ENCODE measurements at regions of chr1 and their contacts with region 1.

Region 1: DNA sequence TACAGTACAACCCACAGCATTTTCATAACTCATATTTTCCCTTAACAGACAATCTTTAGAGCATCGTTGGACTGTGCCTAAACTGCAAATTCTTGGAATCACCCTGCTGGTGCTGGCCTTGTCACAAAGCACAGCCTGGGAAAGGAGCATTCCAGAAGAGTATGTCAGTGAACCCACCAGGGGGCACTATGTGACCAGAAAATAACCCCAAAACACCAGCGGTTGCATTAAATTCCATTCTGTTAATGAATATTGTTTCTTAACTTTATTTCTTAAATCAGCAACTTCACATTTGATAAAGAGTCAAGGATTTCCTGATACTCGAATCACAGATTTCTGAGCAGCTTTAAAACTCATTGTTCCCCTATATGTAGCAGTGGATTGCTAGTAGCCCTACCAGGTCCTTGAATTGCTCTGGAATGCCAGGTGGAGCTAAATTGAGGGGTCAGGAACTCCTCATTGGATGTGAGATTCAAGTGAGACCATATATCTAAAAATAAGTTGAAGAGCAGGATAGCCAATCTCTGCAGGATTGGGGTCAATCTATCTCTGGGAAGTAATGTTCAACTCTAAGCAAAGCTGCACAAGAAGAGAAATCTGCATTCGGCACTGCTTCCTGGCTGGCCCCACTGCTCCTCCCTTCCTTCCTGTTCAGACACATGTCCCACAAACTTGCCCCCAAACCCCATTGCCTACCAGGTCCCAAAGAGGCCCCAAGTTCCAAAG is 12.7 kb upstream of the RAB4A start:
- DNase-seq: peak; percentile 60
- ATAC-seq: peak; percentile 81
- H3K4me3 ChIP-seq: no peak overlapping the region
- H3K27ac ChIP-seq: no peak overlapping the region
- H3K4me1 ChIP-seq: peaks cover 12 to 14% of the 10 kb centered on the region in 2 experiments
- H3K27me3 ChIP-seq: no peaks in the 10 kb centered on the region
- CTCF ChIP-seq: peak; percentile 69 to 89 (median 84)
- POLR2A ChIP-seq: no peak
- RAD21 ChIP-seq: peak; percentile 96

Region 2: DNA sequence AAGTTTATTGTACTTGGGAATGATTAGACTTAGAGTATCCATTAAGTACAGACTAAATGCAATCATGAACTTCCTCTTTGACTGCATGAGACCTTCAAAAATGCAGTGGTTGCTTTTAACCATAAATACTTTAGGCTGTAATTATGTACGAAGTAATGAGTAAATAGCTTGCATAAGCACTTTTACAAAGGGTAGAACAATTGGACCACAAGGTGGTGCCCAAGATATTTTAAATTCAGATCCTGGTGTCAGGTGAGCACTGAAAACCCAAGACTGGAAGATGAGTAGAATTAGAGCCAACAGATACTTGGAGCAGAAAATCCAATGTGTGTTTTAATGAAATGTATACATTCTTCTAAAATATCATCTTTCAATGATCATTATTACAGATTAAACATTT is 566.3 kb before region 1 on chr1:
- CTCF ChIA-PET with region 1: interaction called, 35 read pairs
- POLR2A ChIA-PET with region 1: no interaction called
- RAD21 ChIA-PET with region 1: no interaction called
- intact Hi-C with region 1: loop called (anchors 1 kb)
- DNase-seq: peak; percentile 67
- ATAC-seq: peak; percentile 82
- H3K4me3 ChIP-seq: no peak overlapping the region
- H3K27ac ChIP-seq: no peak overlapping the region
- H3K4me1 ChIP-seq: peaks cover 4 to 10% of the 10 kb centered on the region in 2 experiments; a peak in 3 of 4 replicates
- H3K27me3 ChIP-seq: peaks cover 6% of the 10 kb centered on the region; the same call in 1 of the 2 replicates
- CTCF ChIP-seq: peak; percentile 39 to 80 (median 65)
- POLR2A ChIP-seq: no peak
- RAD21 ChIP-seq: peak; percentile 90

Region 3: GRCh38 chr1:229227298-229227919 is 30.8 kb before region 1 on chr1:
- CTCF ChIA-PET with region 1: interaction called, 34 read pairs
- POLR2A ChIA-PET with region 1: no interaction called
- RAD21 ChIA-PET with region 1: interaction called, 4 read pairs
- intact Hi-C with region 1: no loop called
- DNase-seq: peak; percentile 61
- ATAC-seq: peak; percentile 54
- H3K4me3 ChIP-seq: no peak overlapping the region
- H3K27ac ChIP-seq: no peak overlapping the region
- H3K4me1 ChIP-seq: peaks cover 70 to 78% of the 10 kb centered on the region in 2 experiments
- H3K27me3 ChIP-seq: no peaks in the 10 kb centered on the region
- CTCF ChIP-seq: peak; percentile 78 to 96 (median 88)
- POLR2A ChIP-seq: no peak
- RAD21 ChIP-seq: peak; percentile 96

Region 4: GRCh38 chr1:229479660-229480399 is 221.6 kb after region 1 on chr1:
- CTCF ChIA-PET with region 1: interaction called, 54 read pairs
- POLR2A ChIA-PET with region 1: interaction called, 4 read pairs
- RAD21 ChIA-PET with region 1: interaction called, 4 to 5 read pairs
- intact Hi-C with region 1: loop called (anchors 1 kb)
- DNase-seq: no peak
- ATAC-seq: no peak
- H3K4me3 ChIP-seq: no peak overlapping the region
- H3K27ac ChIP-seq: no peak overlapping the region
- H3K4me1 ChIP-seq: no peaks in the 10 kb centered on the region
- H3K27me3 ChIP-seq: no peaks in the 10 kb centered on the region
- CTCF ChIP-seq: no peak
- POLR2A ChIP-seq: no peak
- RAD21 ChIP-seq: no peak

Region 5: GRCh38 chr1:229625915-229626831 is 368.0 kb after region 1 on chr1 and contains the starts of genes TAF5L and URB2:
- CTCF ChIA-PET with region 1: no interaction called
- POLR2A ChIA-PET with region 1: no interaction called
- RAD21 ChIA-PET with region 1: no interaction called
- intact Hi-C with region 1: loop called (anchors 10 kb)
- DNase-seq: peak; percentile 77
- ATAC-seq: peak; percentile 94
- H3K4me3 ChIP-seq: peak within 1 kb of the TSS; percentile 91 to 97
- H3K27ac ChIP-seq: peak within 1 kb of the TSS; percentile 72
- H3K4me1 ChIP-seq: peaks cover 11 to 18% of the 10 kb centered on the region in 2 experiments; a peak in 3 of 4 replicates
- H3K27me3 ChIP-seq: no peaks in the 10 kb centered on the region
- CTCF ChIP-seq: no peak
- POLR2A ChIP-seq: no peak
- RAD21 ChIP-seq: no peak
- total RNA-seq, gene TAF5L: 22.4 TPM
- total RNA-seq, gene URB2: 20.4 TPM

Region 6: GRCh38 chr1:229691362-229691761 is 433.2 kb after region 1 on chr1:
- CTCF ChIA-PET with region 1: no interaction called
- POLR2A ChIA-PET with region 1: no interaction called
- RAD21 ChIA-PET with region 1: no interaction called
- intact Hi-C with region 1: no loop called
- DNase-seq: no peak
- ATAC-seq: no peak
- H3K4me3 ChIP-seq: no peak overlapping the region
- H3K27ac ChIP-seq: no peak overlapping the region
- H3K4me1 ChIP-seq: 0 out of 4 replicates have a peak, but pooled peaks cover 0 to 3% of the 10 kb centered on the region in 2 experiments
- H3K27me3 ChIP-seq: no peaks in the 10 kb centered on the region
- CTCF ChIP-seq: no peak
- POLR2A ChIP-seq: no peak
- RAD21 ChIP-seq: no peak